Heart left ventricle (tissue), 16 donors: ENCODE measurements at regions of chr6 and their contacts with region 1.

Region 1: GRCh38 chr6:116010790-116011401 is 49.8 kb downstream of the FRK start:
- DNase-seq: peak; percentile 57 to 78 (median 64)
- ATAC-seq: peak; percentile 53 to 74 (median 64)
- H3K4me3 ChIP-seq: peak overlapping the region in 1 of 12 donors; percentile 12
- H3K27ac ChIP-seq: peak overlapping the region in 7 of 12 donors; percentile 12 to 84 (median 30)
- H3K4me1 ChIP-seq: peaks cover 0 to 57% (median 29%) of the 10 kb centered on the region in 12 donors
- H3K27me3 ChIP-seq: no peaks in the 10 kb centered on the region
- CTCF ChIP-seq: peak; percentile 68 to 91 (median 82)
- POLR2A ChIP-seq: no peak

Region 2: GRCh38 chr6:115753446-115753845 is 257.4 kb before region 1 on chr6:
- intact Hi-C with region 1: no loop called
- DNase-seq: no peak
- ATAC-seq: no peak
- H3K4me3 ChIP-seq: no peak overlapping the region
- H3K27ac ChIP-seq: no peak overlapping the region
- H3K4me1 ChIP-seq: no peaks in the 10 kb centered on the region
- H3K27me3 ChIP-seq: no peaks in the 10 kb centered on the region
- CTCF ChIP-seq: no peak
- POLR2A ChIP-seq: no peak

Region 3: GRCh38 chr6:115914098-115914497 is 96.8 kb before region 1 on chr6:
- intact Hi-C with region 1: no loop called
- DNase-seq: no peak
- ATAC-seq: no peak
- H3K4me3 ChIP-seq: no peak overlapping the region
- H3K27ac ChIP-seq: no peak overlapping the region
- H3K4me1 ChIP-seq: no peaks in the 10 kb centered on the region
- H3K27me3 ChIP-seq: peaks cover 0 to 2% (median 0%) of the 10 kb centered on the region in 9 donors
- CTCF ChIP-seq: no peak
- POLR2A ChIP-seq: no peak

Region 4: DNA sequence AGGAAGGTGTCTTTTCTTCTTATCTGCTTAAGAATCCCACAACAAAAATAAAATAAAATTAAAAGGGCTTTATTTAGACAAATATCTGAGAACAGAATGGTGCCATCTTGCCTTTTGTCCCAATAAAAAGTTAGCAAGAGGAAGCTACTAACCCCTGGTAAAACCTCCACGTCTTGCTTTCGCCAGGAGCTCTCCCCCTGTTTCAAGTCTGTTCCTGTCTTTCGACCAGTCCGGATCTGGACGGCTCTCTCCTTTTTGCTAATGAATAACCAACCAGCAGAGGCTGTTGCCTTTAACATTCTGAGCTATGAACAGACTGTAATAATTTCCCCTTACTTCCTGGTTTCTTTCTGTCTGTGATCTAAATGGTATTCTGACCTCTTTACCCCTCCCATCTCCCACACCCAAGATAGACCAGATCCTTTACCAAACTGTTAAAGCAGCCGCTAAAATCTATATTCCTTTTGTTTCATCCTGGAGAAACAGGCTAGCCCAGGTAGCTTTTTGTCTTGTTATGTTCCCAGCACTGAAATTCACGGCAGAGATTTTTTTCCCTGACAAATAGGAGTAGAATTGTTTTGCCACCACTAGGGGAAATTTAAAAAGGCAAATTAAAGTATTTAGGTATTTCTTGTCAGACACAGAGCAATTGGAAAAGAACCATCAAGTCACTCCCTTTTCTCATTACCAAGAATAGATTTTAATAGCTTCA is 49.8 kb after region 1 on chr6 and contains the start of gene FRK:
- intact Hi-C with region 1: loop called in 2 of 10 experiments (anchors 5 kb)
- DNase-seq: peak in 2 of 5 donors; percentile 19 to 39
- ATAC-seq: peak; percentile 56 to 90 (median 82)
- H3K4me3 ChIP-seq: peak within 1 kb of the TSS in 10 of 12 donors; percentile 34 to 62 (median 47)
- H3K27ac ChIP-seq: peak within 1 kb of the TSS in 11 of 12 donors; percentile 29 to 76 (median 54)
- H3K4me1 ChIP-seq: peaks cover 0 to 26% (median 3%) of the 10 kb centered on the region in 12 donors
- H3K27me3 ChIP-seq: no peaks in the 10 kb centered on the region
- CTCF ChIP-seq: peak in 6 of 12 donors; percentile 7 to 41 (median 28)
- POLR2A ChIP-seq: no peak
- total RNA-seq, gene FRK: 4.4 to 10.8 (median 6.4) TPM

Region 5: DNA sequence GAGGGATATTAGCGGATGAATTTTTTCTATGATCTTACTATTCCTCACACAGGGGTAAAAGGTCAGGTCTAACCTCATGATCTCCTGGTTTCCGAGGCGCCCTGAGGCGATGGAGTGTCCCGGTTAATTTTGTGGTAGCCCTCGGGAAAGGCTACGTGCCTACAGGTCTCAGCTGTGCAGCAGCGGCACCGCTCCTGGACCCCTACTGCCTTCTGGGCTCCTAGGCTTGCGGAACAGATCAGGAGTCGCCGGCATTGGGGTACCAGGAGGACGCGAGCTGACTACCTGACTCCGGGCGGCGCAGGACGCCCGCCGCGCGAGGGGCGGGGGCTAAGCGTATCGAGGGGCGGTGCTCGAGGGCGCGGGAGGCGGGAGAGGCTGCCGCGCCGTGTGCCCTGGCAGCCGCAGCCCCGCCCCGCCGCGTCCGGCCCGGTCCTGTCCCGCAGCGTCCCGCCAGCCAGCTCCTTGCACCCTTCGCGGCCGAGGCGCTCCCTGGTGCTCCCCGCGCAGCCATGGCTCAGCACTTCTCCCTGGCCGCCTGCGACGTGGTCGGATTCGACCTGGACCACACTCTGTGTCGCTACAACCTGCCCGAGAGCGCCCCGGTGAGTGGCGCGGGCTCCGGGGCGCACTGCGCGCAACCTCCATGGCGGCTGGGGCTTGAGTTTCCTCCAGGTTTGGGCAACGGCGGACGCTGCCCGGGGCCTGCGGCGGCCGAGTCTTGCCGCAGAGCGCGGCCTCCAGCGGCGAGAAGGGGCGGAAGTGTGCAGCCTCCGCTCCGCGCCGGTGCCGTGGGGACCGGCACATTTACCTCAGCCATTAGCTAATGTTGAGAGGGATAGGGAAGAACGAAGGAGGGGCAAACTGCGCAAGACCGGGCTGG is 89.8 kb after region 1 on chr6 and contains the start of gene NT5DC1:
- intact Hi-C with region 1: loop called (anchors 1 to 5 kb)
- DNase-seq: peak; percentile 81 to 92 (median 89)
- ATAC-seq: peak; percentile 88 to 97 (median 95)
- H3K4me3 ChIP-seq: peak within 1 kb of the TSS; percentile 68 to 94 (median 86)
- H3K27ac ChIP-seq: peak within 1 kb of the TSS; percentile 87 to 99 (median 96)
- H3K4me1 ChIP-seq: peaks cover 0 to 45% (median 34%) of the 10 kb centered on the region in 12 donors
- H3K27me3 ChIP-seq: no peaks in the 10 kb centered on the region
- CTCF ChIP-seq: peak in 9 of 12 donors; percentile 8 to 60 (median 35)
- POLR2A ChIP-seq: peak in 1 of 2 donors; percentile 78
- total RNA-seq, gene NT5DC1: 12.0 to 72.4 (median 51.3) TPM

Region 6: DNA sequence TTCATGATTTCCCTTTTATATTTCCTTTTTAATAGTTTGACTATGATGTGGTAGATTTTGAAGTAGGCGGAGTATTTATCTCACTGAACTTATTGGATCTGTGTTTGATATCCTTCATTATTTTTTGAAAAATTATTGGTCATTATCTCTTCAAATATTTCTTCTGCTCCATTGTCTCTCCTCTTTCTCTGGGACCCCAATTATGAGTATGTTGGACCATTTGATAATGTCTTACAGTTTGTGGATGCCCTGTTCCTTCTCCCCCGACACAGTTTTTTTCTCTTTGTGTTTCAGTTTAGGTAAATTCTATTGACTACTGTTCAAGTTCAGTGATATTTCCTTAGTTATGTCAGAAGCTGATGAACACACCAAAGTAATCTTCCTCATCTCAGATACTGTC is 164.4 kb after region 1 on chr6:
- intact Hi-C with region 1: no loop called
- DNase-seq: no peak
- ATAC-seq: no peak
- H3K4me3 ChIP-seq: no peak overlapping the region
- H3K27ac ChIP-seq: no peak overlapping the region
- H3K4me1 ChIP-seq: peaks cover 0 to 19% (median 0%) of the 10 kb centered on the region in 12 donors
- H3K27me3 ChIP-seq: no peaks in the 10 kb centered on the region
- CTCF ChIP-seq: no peak
- POLR2A ChIP-seq: no peak